Activated T-helper 2 cell treated with anti-CD3 and anti-CD28 coated beads, Interferon-gamma antibody, Interleukin-2, Interleukin-4, amounts not matched to agents 10 μg/mL and 5 μg/mL and 100 μg/mL, durations not matched to agents 14 hours and 24 hours and 36 hours (primary cell): ENCODE measurements at regions of chr14 and their contacts with region 1.

Region 1: GRCh38 chr14:48333221-48333920 is 658.0 kb upstream of the MDGA2 start:
- DNase-seq: no peak
- H3K4me3 Mint-ChIP-seq: no peak overlapping the region
- H3K27ac Mint-ChIP-seq: no peak overlapping the region
- H3K4me1 Mint-ChIP-seq: no peaks in the 10 kb centered on the region
- H3K27me3 Mint-ChIP-seq: no peaks in the 10 kb centered on the region

Region 2: DNA sequence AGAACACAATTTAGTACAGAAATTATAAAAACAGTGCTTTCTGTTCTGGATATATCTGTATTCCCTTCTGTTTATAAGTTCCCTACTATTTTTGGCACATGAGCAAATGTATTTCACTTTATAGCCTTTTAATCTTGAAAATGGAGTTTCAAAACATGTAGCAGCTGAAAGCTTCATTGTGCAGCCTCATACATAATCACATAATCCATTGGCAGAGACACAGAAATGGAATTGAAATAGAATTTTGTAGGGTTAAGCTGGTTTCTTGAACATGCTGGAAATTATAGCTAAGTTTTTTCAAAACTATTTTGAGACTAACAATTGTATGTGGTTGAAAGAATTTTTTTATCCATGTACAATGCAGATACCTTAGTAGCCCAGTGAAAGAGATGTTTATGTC is 43.7 kb before region 1 on chr14:
- intact Hi-C with region 1: loop called (anchors 2 kb)
- DNase-seq: no peak
- H3K4me3 Mint-ChIP-seq: no peak overlapping the region
- H3K27ac Mint-ChIP-seq: no peak overlapping the region
- H3K4me1 Mint-ChIP-seq: no peaks in the 10 kb centered on the region
- H3K27me3 Mint-ChIP-seq: no peaks in the 10 kb centered on the region

Region 3: GRCh38 chr14:48526307-48526706 is 192.9 kb after region 1 on chr14:
- intact Hi-C with region 1: no loop called
- DNase-seq: no peak
- H3K4me3 Mint-ChIP-seq: no peak overlapping the region
- H3K27ac Mint-ChIP-seq: no peak overlapping the region
- H3K4me1 Mint-ChIP-seq: no peaks in the 10 kb centered on the region
- H3K27me3 Mint-ChIP-seq: no peaks in the 10 kb centered on the region